Activated B cell treated with CpG ODN at 0.5 μM for 24 hours (primary cell): ENCODE measurements at regions of chr2 and their contacts with region 1.

Region 1: GRCh38 chr2:127857265-127857808 is 618 bp downstream of the POLR2D start:
- DNase-seq: no peak
- ATAC-seq: no peak
- H3K4me3 Mint-ChIP-seq: peak overlapping the region; percentile 88
- H3K27ac Mint-ChIP-seq: peak overlapping the region; percentile 64
- H3K4me1 Mint-ChIP-seq: peaks cover 42% of the 10 kb centered on the region
- H3K27me3 Mint-ChIP-seq: no peaks in the 10 kb centered on the region
- CTCF ChIP-seq: no peak

Region 2: DNA sequence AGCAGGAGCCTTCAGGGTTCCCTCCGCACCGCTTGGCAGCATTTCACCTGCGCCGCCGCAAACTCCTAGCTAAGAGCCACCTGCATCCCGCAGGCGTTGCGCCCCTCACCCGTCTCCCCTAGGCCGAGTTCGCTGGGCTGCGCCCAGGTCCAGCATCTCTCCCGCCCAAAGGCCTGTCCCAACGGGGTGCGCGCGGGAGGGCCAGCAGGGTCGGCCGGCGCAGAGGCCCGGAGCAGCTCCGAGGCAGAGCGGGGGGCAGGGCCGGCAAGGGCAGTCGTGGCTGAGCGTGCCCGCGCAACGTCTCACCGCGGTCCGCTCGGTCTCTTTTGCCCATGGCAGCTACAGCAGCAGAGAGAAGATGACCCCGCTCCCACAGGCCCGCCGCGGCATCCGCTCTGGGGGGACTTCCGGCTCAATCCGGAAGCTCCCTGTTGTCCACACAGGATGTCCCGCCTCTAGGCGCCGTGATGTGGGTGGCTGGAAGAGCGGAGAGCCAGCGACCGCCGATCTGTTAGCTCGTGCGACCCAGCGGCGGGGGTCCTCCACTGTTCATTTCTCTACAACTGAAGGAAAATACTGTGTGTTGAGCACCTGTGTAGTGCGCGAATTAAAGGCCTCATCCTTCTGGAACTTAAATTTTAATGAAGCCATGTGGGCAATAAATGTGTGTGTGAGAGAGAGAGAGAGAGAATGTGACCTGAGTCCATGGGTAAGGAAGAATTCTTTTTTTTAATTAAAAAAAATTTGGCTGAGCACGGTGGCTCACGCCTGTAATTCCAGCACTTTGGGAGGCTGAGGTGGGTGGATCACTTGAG is 563.4 kb before region 1 on chr2 and contains the start of gene ERCC3:
- CTCF ChIA-PET with region 1: no interaction called
- POLR2A ChIA-PET with region 1: no interaction called
- intact Hi-C with region 1: loop called (anchors 10 kb)
- DNase-seq: peak; percentile 78
- ATAC-seq: peak; percentile 98
- H3K4me3 Mint-ChIP-seq: peak within 1 kb of the TSS; percentile 97
- H3K27ac Mint-ChIP-seq: peak within 1 kb of the TSS; percentile 95
- H3K4me1 Mint-ChIP-seq: peaks cover 25% of the 10 kb centered on the region
- H3K27me3 Mint-ChIP-seq: no peaks in the 10 kb centered on the region
- CTCF ChIP-seq: no peak
- total RNA-seq, gene ERCC3: 55.9 and 65.6 TPM in 2 replicates

Region 3: GRCh38 chr2:127743477-127744026 is 113.8 kb before region 1 on chr2:
- CTCF ChIA-PET with region 1: no interaction called
- POLR2A ChIA-PET with region 1: interaction called, 3 read pairs
- intact Hi-C with region 1: loop called (anchors 2 kb)
- DNase-seq: no peak
- ATAC-seq: no peak
- H3K4me3 Mint-ChIP-seq: no peak overlapping the region
- H3K27ac Mint-ChIP-seq: no peak overlapping the region
- H3K4me1 Mint-ChIP-seq: peaks cover 8% of the 10 kb centered on the region
- H3K27me3 Mint-ChIP-seq: no peaks in the 10 kb centered on the region
- CTCF ChIP-seq: no peak

Region 4: DNA sequence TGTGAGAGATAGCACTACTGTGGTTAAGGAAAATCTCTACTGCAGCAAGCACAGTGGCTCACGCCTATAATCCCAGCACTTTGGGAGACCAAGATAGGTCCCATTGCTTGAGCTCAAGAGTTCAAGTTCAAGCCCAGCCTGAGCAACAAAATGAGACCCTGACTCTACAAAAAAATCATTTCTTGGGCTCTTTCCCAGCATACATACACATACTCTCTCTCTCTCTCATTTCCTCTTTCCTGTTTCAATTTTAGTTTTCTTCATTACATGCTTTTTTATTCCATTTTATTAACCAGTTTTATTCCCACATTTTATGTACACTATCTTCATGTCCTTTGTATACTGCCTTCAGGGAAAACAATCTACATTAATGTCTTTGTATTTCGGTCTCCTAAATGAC is 60.9 kb before region 1 on chr2:
- CTCF ChIA-PET with region 1: no interaction called
- POLR2A ChIA-PET with region 1: interaction called, 3 read pairs
- intact Hi-C with region 1: loop called (anchors 5 kb)
- DNase-seq: no peak
- ATAC-seq: peak; percentile 18
- H3K4me3 Mint-ChIP-seq: peak overlapping the region; percentile 69
- H3K27ac Mint-ChIP-seq: peak overlapping the region; percentile 84
- H3K4me1 Mint-ChIP-seq: peaks cover 76% of the 10 kb centered on the region
- H3K27me3 Mint-ChIP-seq: no peaks in the 10 kb centered on the region
- CTCF ChIP-seq: no peak

Region 5: GRCh38 chr2:127810619-127811396 is 46.5 kb before region 1 on chr2 and contains the start of gene WDR33:
- CTCF ChIA-PET with region 1: interaction called, 3 read pairs
- POLR2A ChIA-PET with region 1: interaction called, 6 read pairs
- intact Hi-C with region 1: loop called (anchors 1 kb)
- DNase-seq: peak; percentile 88
- ATAC-seq: peak; percentile 96
- H3K4me3 Mint-ChIP-seq: peak within 1 kb of the TSS; percentile 89
- H3K27ac Mint-ChIP-seq: peak within 1 kb of the TSS; percentile 99
- H3K4me1 Mint-ChIP-seq: peaks cover 56% of the 10 kb centered on the region
- H3K27me3 Mint-ChIP-seq: no peaks in the 10 kb centered on the region
- CTCF ChIP-seq: no peak
- total RNA-seq, gene WDR33: 83.0 and 93.0 TPM in 2 replicates

Region 6: GRCh38 chr2:127829845-127830246 is 27.5 kb before region 1 on chr2:
- CTCF ChIA-PET with region 1: no interaction called
- POLR2A ChIA-PET with region 1: interaction called, 8 read pairs
- intact Hi-C with region 1: loop called (anchors 1 kb)
- DNase-seq: peak; percentile 57
- ATAC-seq: peak; percentile 94
- H3K4me3 Mint-ChIP-seq: peak overlapping the region; percentile 66
- H3K27ac Mint-ChIP-seq: peak overlapping the region; percentile 84
- H3K4me1 Mint-ChIP-seq: peaks cover 43% of the 10 kb centered on the region
- H3K27me3 Mint-ChIP-seq: peaks cover 12% of the 10 kb centered on the region
- CTCF ChIP-seq: no peak

Region 7: DNA sequence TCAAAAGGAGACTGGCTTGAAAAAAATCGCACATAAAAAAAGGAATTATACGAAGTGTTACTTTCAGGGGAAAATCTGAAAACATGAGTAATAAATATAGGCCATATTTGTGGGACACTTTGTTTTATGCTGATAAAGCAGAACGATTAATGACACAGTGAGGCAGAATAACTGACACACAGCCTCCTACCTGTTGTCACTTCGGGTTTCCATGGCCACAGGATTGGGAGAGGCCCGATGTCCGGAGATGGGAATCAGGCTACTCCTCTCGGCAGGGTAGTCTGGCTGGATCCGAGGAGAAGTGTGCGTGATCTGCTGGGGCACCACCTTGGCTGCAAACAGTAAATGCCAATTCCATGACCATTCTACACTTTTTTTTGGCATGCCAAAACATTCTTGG is 138.8 kb after region 1 on chr2:
- CTCF ChIA-PET with region 1: no interaction called
- POLR2A ChIA-PET with region 1: no interaction called
- intact Hi-C with region 1: no loop called
- DNase-seq: no peak
- ATAC-seq: no peak
- H3K4me3 Mint-ChIP-seq: no peak overlapping the region
- H3K27ac Mint-ChIP-seq: no peak overlapping the region
- H3K4me1 Mint-ChIP-seq: no peaks in the 10 kb centered on the region
- H3K27me3 Mint-ChIP-seq: no peaks in the 10 kb centered on the region
- CTCF ChIP-seq: no peak

Region 8: GRCh38 chr2:128090945-128091725 is 233.8 kb after region 1 on chr2 and contains the start of gene UGGT1:
- CTCF ChIA-PET with region 1: no interaction called
- POLR2A ChIA-PET with region 1: interaction called, 4 read pairs
- intact Hi-C with region 1: loop called (anchors 1 kb)
- DNase-seq: peak; percentile 83
- ATAC-seq: peak; percentile 96
- H3K4me3 Mint-ChIP-seq: peak within 1 kb of the TSS; percentile 88
- H3K27ac Mint-ChIP-seq: peak within 1 kb of the TSS; percentile 93
- H3K4me1 Mint-ChIP-seq: peaks cover 41% of the 10 kb centered on the region
- H3K27me3 Mint-ChIP-seq: no peaks in the 10 kb centered on the region
- CTCF ChIP-seq: no peak
- total RNA-seq, gene UGGT1: 43.7 and 46.8 TPM in 2 replicates

Region 9: DNA sequence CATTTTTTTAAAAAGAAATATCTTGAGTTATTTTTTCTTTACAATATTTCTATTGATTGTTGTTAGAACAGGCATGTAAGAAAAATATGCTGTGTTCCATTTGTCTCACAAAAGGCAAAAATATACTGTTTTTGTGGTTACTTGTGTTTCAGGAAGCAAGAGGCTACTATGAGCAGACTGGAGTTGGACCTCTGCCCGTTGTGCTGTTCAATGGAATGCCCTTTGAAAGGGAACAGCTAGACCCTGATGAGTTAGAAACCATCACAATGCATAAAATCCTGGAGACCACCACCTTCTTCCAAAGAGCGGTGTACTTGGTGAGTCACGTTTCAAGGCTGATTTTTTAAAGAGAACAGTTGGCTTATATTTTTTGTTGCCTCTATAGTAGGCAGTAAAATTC is 288.3 kb after region 1 on chr2:
- CTCF ChIA-PET with region 1: no interaction called
- POLR2A ChIA-PET with region 1: no interaction called
- intact Hi-C with region 1: no loop called
- DNase-seq: no peak
- ATAC-seq: no peak
- H3K4me3 Mint-ChIP-seq: no peak overlapping the region
- H3K27ac Mint-ChIP-seq: no peak overlapping the region
- H3K4me1 Mint-ChIP-seq: no peaks in the 10 kb centered on the region
- H3K27me3 Mint-ChIP-seq: no peaks in the 10 kb centered on the region
- CTCF ChIP-seq: no peak